ENCODE measurements at regions of chr6 and their contacts with region 1.

Region 1: GRCh38 chr6:149028767-149029405 is 282.1 kb downstream of the UST start:
- DNase-seq: peak in 1 of 2 donors; percentile 34
- H3K4me3 ChIP-seq: no peak overlapping the region
- H3K27ac ChIP-seq: no peak overlapping the region
- H3K4me1 ChIP-seq: peaks cover 0 to 24% (median 8%) of the 10 kb centered on the region in 4 donors
- H3K27me3 ChIP-seq: no peaks in the 10 kb centered on the region
- CTCF ChIP-seq: peak; percentile 64 to 87

Region 2: GRCh38 chr6:148548065-148548748 is 480.7 kb before region 1 on chr6:
- intact Hi-C with region 1: no loop called
- DNase-seq: no peak
- H3K4me3 ChIP-seq: no peak overlapping the region
- H3K27ac ChIP-seq: no peak overlapping the region
- H3K4me1 ChIP-seq: peaks cover 0 to 5% (median 0%) of the 10 kb centered on the region in 4 donors
- H3K27me3 ChIP-seq: no peaks in the 10 kb centered on the region
- CTCF ChIP-seq: no peak

Region 3: DNA sequence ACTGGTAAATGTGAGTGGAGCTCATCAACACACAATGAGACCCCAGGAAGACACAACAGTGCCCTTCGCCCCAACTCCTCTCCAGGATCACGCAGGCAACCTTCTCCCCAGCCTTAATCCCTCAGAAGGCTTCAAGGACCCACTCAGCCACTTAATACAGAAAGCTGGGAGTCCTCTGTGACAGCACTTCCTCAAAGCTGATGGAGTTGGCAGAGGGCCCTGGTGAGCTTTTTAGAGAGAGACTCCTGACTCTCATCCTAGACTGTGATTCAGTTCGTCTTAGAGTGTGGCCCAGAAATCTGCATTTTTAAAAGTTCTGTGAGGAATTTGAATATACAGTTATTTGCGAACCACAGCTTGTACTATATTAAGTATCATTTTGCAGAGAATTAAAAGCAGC is 94.3 kb before region 1 on chr6:
- intact Hi-C with region 1: no loop called
- DNase-seq: peak; percentile 73 to 74
- H3K4me3 ChIP-seq: no peak overlapping the region
- H3K27ac ChIP-seq: peak overlapping the region; percentile 25 to 40
- H3K4me1 ChIP-seq: peaks cover 0 to 46% (median 20%) of the 10 kb centered on the region in 4 donors
- H3K27me3 ChIP-seq: no peaks in the 10 kb centered on the region
- CTCF ChIP-seq: no peak

Region 4: DNA sequence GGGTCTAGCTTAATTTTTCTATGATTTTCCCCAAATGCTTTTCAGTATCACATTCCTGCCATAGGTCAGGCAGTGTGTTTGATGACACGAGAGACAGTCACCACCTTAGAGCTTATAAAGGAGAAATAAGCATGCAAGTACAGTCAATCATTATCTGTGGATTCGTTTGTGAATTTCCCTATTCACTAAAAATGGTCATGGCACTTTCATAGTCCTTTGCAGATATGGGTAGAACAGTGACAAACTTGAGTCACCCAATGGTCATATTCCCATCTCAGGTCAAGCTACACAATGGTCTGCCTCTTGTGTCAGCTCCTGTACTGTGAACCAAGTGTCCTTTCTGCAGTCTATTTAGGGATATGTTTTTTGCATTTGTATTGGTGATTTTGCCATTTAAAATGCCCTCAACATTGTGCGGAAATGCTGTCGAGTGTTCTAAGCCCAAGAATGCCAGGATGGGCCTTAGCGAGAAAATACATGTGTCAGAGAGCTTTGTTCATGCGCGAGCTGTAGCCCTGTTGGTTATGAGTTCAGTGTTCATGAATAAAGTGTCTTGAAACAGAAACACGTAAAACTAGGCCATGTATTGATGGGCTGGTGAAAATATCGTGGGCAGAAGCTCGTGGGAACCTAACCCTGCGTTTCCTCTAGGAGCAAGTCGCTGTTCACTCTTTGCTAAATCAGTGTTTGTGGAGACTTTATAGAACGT is 391.0 kb after region 1 on chr6:
- intact Hi-C with region 1: loop called (anchors 1 kb)
- DNase-seq: no peak
- H3K4me3 ChIP-seq: no peak overlapping the region
- H3K27ac ChIP-seq: no peak overlapping the region
- H3K4me1 ChIP-seq: peaks cover 0 to 15% (median 10%) of the 10 kb centered on the region in 4 donors
- H3K27me3 ChIP-seq: no peaks in the 10 kb centered on the region
- CTCF ChIP-seq: no peak

Region 5: GRCh38 chr6:149431905-149432775 is 403.3 kb after region 1 on chr6:
- intact Hi-C with region 1: loop called (anchors 1 kb)
- DNase-seq: peak; percentile 92 to 95
- H3K4me3 ChIP-seq: no peak overlapping the region
- H3K27ac ChIP-seq: no peak overlapping the region
- H3K4me1 ChIP-seq: peaks cover 0 to 8% (median 3%) of the 10 kb centered on the region in 4 donors
- H3K27me3 ChIP-seq: peaks cover 0 to 33% of the 10 kb centered on the region in 2 donors
- CTCF ChIP-seq: peak; percentile 93

Region 6: GRCh38 chr6:149484733-149485700 is 456.1 kb after region 1 on chr6 and contains the start of gene ZC3H12D:
- intact Hi-C with region 1: no loop called
- DNase-seq: peak; percentile 51 to 73
- H3K4me3 ChIP-seq: peak within 1 kb of the TSS in 1 of 2 donors; percentile 15
- H3K27ac ChIP-seq: no peak within 1 kb of the TSS
- H3K4me1 ChIP-seq: peaks cover 0 to 17% (median 6%) of the 10 kb centered on the region in 4 donors
- H3K27me3 ChIP-seq: no peaks in the 10 kb centered on the region
- CTCF ChIP-seq: no peak

Region 7: GRCh38 chr6:149513915-149514314 is 485.0 kb after region 1 on chr6:
- intact Hi-C with region 1: loop called (anchors 10 kb)
- DNase-seq: no peak
- H3K4me3 ChIP-seq: no peak overlapping the region
- H3K27ac ChIP-seq: no peak overlapping the region
- H3K4me1 ChIP-seq: no peaks in the 10 kb centered on the region
- H3K27me3 ChIP-seq: no peaks in the 10 kb centered on the region
- CTCF ChIP-seq: no peak